ENCODE measurements at regions of chr1 and their contacts with region 1.

Region 1: GRCh38 chr1:151739590-151740375 is 18.5 kb downstream of the RIIAD1 start:
- DNase-seq: peak; percentile 91
- ATAC-seq: peak; percentile 59
- H3K4me3 ChIP-seq: peak overlapping the region; percentile 40; the same call in 1 of the 2 replicates
- H3K27ac ChIP-seq: no peak overlapping the region
- H3K4me1 ChIP-seq: peaks cover 9% of the 10 kb centered on the region
- H3K27me3 ChIP-seq: no peaks in the 10 kb centered on the region
- CTCF ChIP-seq: peak; percentile 43

Region 2: DNA sequence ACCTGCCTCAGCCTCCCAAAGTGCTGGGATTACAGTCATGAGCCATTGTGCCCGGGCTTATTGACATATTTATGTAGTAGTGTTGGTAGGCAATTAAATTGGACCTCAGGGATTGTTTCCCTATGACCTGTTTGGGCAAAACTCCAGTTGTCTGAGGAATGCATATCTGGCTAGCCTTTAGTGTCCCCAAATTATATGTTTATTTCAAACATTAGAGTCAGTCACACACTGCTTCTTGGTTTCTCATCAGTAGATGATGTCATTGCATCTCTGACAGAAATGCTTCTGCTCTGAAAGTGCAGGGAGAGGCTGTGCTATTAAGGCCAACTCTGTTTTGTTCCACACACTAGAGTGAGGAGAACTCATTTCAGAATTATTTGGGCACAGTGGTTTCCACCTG is 529.0 kb before region 1 on chr1:
- CTCF ChIA-PET with region 1: interaction called, 13 read pairs
- POLR2A ChIA-PET with region 1: no interaction called
- intact Hi-C with region 1: no loop called
- DNase-seq: peak; percentile 62
- ATAC-seq: peak; percentile 78
- H3K4me3 ChIP-seq: no peak overlapping the region
- H3K27ac ChIP-seq: no peak overlapping the region
- H3K4me1 ChIP-seq: no peaks in the 10 kb centered on the region
- H3K27me3 ChIP-seq: no peaks in the 10 kb centered on the region
- CTCF ChIP-seq: no peak

Region 3: DNA sequence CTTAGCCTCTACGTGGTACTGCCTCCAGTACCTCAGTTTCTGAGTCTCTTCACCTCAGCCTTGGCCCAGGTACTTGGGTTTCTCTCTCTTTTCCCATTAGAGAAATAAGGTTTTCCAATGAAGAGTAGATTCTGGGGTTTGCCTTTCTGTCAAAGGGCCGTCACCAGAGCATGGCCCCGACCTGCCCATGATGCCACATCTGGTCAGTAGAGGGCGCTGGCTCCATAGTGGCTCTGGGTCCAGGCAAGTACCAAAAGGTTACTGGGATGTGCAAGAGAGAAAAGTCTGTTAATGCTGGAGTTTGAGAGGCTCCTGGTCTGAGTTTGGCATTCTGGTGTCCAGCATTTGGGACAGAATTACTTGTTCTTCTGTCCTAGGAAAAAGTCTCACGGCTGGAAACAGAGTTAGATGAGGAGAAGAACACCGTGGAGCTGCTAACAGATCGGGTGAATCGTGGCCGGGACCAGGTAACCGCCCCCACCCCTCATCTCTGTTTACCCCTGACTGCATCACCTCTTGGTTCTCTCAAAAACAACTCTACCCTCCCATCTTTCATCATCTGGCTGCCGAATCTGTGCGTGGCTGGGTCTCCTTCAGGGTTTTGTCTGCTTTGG is 205.0 kb before region 1 on chr1:
- CTCF ChIA-PET with region 1: interaction called, 5 read pairs
- POLR2A ChIA-PET with region 1: no interaction called
- intact Hi-C with region 1: loop called (anchors 1 kb)
- DNase-seq: peak; percentile 88
- ATAC-seq: peak; percentile 48
- H3K4me3 ChIP-seq: no peak overlapping the region
- H3K27ac ChIP-seq: no peak overlapping the region
- H3K4me1 ChIP-seq: peaks cover 39% of the 10 kb centered on the region
- H3K27me3 ChIP-seq: no peaks in the 10 kb centered on the region
- CTCF ChIP-seq: peak; percentile 99

Region 4: GRCh38 chr1:151594143-151594625 is 145.6 kb before region 1 on chr1:
- CTCF ChIA-PET with region 1: interaction called, 5 read pairs
- POLR2A ChIA-PET with region 1: no interaction called
- intact Hi-C with region 1: loop called (anchors 1 kb)
- DNase-seq: peak; percentile 89
- ATAC-seq: peak; percentile 89
- H3K4me3 ChIP-seq: peak overlapping the region; percentile 27; the same call in 1 of the 2 replicates
- H3K27ac ChIP-seq: no peak overlapping the region
- H3K4me1 ChIP-seq: peaks cover 26% of the 10 kb centered on the region
- H3K27me3 ChIP-seq: no peaks in the 10 kb centered on the region
- CTCF ChIP-seq: peak; percentile 99

Region 5: DNA sequence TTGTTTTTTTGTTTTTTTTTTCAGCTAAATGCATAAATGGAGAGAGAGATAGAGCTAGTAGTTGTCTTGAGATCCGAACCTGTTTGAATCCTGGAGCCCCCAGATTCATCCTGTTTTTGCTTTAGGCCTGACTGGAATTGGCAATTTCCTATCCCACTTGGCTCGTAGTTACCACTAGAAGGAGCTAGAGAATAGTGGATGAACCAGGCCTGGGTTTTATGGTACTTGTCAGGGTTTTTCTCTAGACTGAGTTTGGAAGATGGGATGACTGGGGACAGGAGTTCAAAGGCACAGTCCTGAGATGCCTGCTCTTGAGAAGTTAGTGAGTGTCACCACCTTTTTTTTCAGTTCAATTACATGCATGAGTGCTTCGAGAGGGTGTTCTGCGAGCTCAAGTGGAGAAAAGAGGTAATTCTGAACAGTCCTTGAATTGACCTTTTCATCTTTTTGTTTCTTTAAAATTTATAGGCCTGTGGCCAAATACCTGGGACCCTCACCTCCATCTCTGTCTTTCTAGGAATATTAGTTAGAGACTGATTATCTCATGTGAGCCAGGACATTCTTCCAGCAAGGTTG is 46.6 kb before region 1 on chr1:
- CTCF ChIA-PET with region 1: interaction called, 4 read pairs
- POLR2A ChIA-PET with region 1: no interaction called
- intact Hi-C with region 1: loop called (anchors 1 kb)
- DNase-seq: peak; percentile 72
- ATAC-seq: peak; percentile 79
- H3K4me3 ChIP-seq: no peak overlapping the region
- H3K27ac ChIP-seq: no peak overlapping the region
- H3K4me1 ChIP-seq: no peaks in the 10 kb centered on the region
- H3K27me3 ChIP-seq: no peaks in the 10 kb centered on the region
- CTCF ChIP-seq: peak; percentile 97

Region 6: DNA sequence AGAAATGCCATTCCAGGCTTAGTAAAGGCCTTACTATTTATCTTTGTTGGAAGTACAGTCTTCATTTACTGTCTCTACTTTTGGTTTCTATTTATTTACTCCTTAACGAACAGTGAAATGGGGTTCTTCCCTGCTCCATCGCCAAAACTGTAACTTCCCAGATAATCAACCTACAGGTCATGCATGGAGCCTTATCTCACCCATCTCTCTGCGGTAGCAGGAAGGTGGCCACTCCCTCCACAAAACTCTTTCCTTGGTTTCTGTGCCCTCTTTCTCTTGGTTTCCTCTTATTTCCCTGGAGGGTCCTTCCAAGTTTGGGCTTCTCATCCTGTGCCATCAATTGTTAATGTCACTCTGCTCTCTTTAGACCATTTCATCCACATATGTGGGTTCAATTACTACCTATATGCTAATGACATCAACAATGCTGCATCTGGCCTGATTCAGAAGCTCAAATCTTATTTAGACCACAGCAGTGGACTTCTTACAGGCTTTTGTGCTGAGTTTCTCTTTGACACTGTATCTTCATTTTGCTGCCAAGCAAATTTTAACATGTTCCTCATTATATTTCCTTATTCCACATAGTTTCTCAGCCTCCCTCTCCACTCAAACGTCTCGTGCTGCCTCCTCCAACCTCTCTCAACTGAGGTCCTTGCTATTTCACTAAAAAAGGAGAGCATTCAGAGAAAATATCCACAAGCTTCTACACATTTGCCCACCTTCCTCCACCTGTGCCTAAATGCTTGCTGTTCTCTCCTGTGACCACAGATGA is 43.8 kb after region 1 on chr1:
- CTCF ChIA-PET with region 1: no interaction called
- POLR2A ChIA-PET with region 1: no interaction called
- intact Hi-C with region 1: no loop called
- DNase-seq: no peak
- ATAC-seq: no peak
- H3K4me3 ChIP-seq: no peak overlapping the region
- H3K27ac ChIP-seq: no peak overlapping the region
- H3K4me1 ChIP-seq: no peaks in the 10 kb centered on the region
- H3K27me3 ChIP-seq: no peaks in the 10 kb centered on the region
- CTCF ChIP-seq: no peak

Measured in PC-3 (cell line).